Gastrocnemius medialis (tissue), 4 donors: ENCODE measurements at regions of chrX and their contacts with region 1.

Region 1: DNA sequence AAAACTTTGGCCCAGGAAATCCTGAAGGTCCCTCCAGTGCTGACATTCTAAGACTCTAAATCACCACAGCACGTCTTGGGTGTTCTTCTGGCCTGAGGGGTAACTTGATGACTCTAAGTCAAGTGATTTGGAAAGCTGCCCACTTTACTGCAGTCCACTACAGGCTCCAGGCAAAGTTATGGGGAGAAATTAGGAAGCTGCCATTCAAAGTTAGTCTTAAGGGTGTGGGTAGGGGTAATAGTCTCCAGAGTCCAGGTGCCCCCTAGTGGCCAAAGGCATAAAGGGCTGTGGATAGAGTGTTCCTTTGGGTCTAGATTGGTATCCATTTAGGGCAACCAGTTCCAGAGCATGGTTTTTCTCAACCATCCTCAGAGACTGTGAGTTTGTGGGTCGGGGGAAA is 38.7 kb upstream of the SLC16A2 start:
- DNase-seq: peak; percentile 2 to 45
- ATAC-seq: peak; percentile 72 to 73
- H3K4me3 ChIP-seq: no peak overlapping the region
- H3K27ac ChIP-seq: no peak overlapping the region
- H3K4me1 ChIP-seq: no peaks in the 10 kb centered on the region
- H3K27me3 ChIP-seq: no peaks in the 10 kb centered on the region
- CTCF ChIP-seq: peak; percentile 27 to 74 (median 61)
- POLR2A ChIP-seq: no peak

Region 2: DNA sequence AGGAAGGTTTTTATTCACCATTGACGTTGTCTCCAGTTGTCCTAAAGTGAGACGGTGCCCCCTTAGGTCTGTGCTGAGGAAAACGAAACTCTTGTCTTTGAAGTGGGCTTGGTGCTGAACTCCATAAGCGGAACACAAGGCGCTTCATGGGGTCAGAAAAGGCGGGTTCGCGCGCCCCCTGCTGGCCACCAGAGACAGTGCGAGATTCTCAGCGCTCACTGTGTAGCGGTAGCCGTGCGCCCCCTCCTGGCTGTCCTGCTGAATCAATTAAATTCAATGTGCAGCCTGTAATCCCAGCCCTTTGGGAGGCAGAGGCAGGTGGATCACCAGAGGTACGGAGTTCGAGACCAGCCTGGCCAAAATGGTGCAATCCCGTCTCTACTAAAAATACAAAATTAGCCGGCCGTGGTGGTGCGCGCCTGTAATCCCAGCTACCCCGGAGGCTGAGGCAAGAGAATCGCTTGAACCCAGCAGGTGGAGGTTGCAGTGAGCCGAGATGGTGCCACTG is 167.7 kb after region 1 on chrX:
- in situ Hi-C with region 1: loop called in 3 of 4 experiments (anchors 10 to 25 kb)
- intact Hi-C with region 1: loop called (anchors 1 kb)
- DNase-seq: peak; percentile 38 to 67
- ATAC-seq: peak; percentile 60 to 96
- H3K4me3 ChIP-seq: peak overlapping the region in 1 of 4 donors; percentile 25
- H3K27ac ChIP-seq: peak overlapping the region in 2 of 4 donors; percentile 46 to 56
- H3K4me1 ChIP-seq: no peaks in the 10 kb centered on the region
- H3K27me3 ChIP-seq: no peaks in the 10 kb centered on the region
- CTCF ChIP-seq: peak; percentile 87 to 97 (median 94)
- POLR2A ChIP-seq: no peak